PC-9 (cell line): ENCODE measurements at regions of chr22 and their contacts with region 1.

Region 1: GRCh38 chr22:45096256-45096907 is 67.3 kb upstream of the NUP50 start:
- DNase-seq: peak; percentile 53 to 67
- H3K4me3 ChIP-seq: no peak overlapping the region
- H3K27ac ChIP-seq: no peak overlapping the region
- H3K4me1 ChIP-seq: no peaks in the 10 kb centered on the region
- H3K27me3 ChIP-seq: peaks cover 76% of the 10 kb centered on the region
- CTCF ChIP-seq: peak; percentile 88

Region 2: DNA sequence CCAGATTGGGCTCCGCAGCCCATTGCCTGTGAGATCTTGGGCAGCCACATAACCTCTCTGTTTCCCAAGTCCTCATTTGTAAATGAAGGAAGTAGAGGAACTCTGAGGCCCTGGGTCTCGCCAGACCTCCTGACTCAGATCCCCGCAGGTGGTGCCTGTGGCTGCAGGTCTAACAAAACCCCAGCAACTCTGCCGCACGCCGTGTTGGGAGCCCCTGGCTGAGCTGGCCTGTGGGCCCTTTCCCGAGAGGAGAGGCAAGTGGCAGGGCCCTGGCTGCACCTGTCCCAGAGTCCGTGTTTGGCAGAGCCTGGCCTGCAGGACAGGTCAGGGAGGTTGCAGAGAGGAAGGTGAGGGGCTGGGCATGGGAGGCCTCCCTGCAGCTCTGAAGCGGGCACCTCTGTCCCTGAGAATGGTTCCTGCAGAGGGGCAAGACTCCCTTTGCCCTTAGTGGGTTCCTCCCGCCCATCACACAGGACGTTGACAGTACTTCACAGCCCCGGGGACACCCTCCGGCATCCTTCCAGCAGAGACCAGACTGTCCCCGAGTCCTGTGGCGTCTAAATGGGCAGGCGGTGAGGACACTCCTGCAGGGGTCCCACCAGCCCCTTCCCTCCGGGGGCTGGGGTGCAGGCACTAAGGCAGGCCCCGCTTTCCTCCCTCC is 276.3 kb before region 1 on chr22:
- CTCF ChIA-PET with region 1: no interaction called
- POLR2A ChIA-PET with region 1: no interaction called
- intact Hi-C with region 1: loop called (anchors 5 kb)
- DNase-seq: no peak
- H3K4me3 ChIP-seq: no peak overlapping the region
- H3K27ac ChIP-seq: no peak overlapping the region
- H3K4me1 ChIP-seq: no peaks in the 10 kb centered on the region
- H3K27me3 ChIP-seq: no peaks in the 10 kb centered on the region
- CTCF ChIP-seq: no peak

Region 3: DNA sequence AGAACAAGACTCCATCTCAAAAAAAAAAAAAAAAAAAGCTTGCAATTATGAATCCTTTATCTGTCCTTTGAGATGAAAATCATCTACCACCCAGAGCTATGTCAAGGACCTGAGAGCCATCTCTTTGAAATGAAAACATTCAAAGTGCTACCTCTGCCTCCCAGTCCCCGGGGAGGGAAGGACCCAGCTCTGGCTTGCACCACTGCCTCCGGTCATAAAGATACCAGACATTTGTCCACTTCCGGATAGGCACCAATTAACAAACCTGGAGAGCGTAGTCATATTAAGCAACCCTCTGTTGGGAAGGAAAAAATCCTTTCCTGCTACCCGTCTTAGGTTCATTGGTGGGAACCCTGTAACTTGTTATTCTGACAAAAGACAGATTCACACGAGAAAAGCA is 245.4 kb before region 1 on chr22:
- CTCF ChIA-PET with region 1: interaction called, 18 read pairs
- POLR2A ChIA-PET with region 1: no interaction called
- intact Hi-C with region 1: no loop called
- DNase-seq: no peak
- H3K4me3 ChIP-seq: no peak overlapping the region
- H3K27ac ChIP-seq: no peak overlapping the region
- H3K4me1 ChIP-seq: no peaks in the 10 kb centered on the region
- H3K27me3 ChIP-seq: no peaks in the 10 kb centered on the region
- CTCF ChIP-seq: no peak

Region 4: DNA sequence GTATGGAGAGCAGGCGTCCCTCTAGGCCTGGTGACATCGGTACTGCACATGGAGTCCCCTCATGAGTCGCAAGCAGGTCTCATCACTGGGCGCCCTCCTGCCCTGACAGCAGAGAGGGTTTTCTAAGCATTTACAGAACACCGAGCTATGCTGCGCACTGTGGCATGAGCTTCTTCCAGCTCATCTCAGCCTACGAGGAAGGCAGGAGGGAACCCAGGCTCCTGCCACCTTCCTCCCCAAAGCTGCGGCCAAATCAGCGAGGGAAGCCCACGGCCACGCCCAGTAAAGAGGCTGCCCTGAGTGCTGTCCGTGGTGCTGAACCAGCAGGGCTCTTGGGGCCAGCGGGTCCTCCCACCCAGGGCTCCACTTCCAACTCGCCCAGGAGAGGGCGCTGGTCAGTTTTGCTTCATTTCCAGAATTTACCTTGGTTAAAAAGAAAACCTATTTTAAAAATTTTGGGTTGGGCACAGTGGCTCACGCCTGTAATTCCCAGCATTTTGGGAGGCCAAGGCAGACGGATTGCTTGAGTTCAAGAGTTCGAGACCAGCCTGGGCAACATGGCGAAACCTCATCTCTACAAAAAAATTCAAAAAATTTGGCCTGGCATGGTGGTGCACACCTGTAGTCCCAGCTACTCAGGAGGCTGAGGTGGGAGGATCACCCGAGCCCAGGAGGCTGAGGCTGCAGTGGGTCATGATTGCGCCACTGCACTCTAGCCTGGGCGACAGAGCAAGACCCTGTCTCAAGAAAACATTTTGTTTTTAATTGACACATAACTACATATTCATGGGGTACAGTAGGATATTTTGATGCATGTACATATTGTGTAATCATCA is 120.7 kb before region 1 on chr22:
- CTCF ChIA-PET with region 1: no interaction called
- POLR2A ChIA-PET with region 1: no interaction called
- intact Hi-C with region 1: loop called (anchors 2 kb)
- DNase-seq: peak; percentile 76 to 87
- H3K4me3 ChIP-seq: no peak overlapping the region
- H3K27ac ChIP-seq: no peak overlapping the region
- H3K4me1 ChIP-seq: no peaks in the 10 kb centered on the region
- H3K27me3 ChIP-seq: peaks cover 81% of the 10 kb centered on the region
- CTCF ChIP-seq: peak; percentile 97